GM23248 (cell line): ENCODE measurements at regions of chr6 and their contacts with region 1.

Region 1: DNA sequence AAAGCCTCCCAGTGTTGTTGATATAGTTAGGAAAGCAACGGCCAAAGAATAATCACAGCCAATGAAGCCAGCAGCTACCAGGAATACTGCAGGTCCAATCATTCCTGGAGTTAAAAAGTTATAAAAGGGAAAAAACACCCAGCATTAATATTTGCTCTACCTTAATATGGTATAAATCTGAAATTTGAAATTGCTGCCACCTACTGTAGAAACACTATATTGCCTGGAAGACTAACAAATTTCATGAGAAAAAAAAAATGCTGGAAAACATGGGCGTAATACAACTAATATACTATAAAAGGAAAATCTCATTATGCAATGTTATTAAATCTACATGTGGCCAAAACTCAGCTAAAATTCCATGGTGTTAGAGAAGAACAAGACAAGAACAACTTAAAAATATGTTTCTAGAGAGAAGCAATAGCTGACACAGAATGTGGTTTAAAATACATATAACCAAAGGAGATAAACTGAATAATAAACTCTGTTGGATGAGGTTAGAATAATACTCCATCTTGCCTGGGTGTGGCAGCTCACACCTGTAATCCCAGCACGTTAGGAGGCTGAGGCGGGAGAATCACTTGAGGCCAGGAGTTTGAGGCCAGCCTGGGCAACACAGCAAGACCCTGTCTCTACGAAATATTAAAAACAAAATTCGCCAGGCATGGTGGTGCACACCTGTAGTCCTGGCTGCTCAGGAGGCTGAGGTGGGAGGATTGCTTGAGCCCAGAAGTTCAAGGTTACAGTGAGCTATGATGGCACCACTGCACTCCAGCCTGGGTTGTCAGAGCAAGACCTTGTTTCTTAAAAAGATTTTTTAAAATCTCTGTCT is 43.1 kb downstream of the SLC17A5 start:
- DNase-seq: peak; percentile 71
- H3K4me3 ChIP-seq: no peak overlapping the region
- H3K27ac ChIP-seq: no peak overlapping the region
- H3K4me1 ChIP-seq: no peaks in the 10 kb centered on the region; the same call in 1 of the 2 replicates
- H3K27me3 ChIP-seq: no peaks in the 10 kb centered on the region

Region 2: GRCh38 chr6:72850469-72850868 is 760.2 kb before region 1 on chr6:
- in situ Hi-C with region 1: no loop called
- DNase-seq: no peak
- H3K4me3 ChIP-seq: no peak overlapping the region
- H3K27ac ChIP-seq: no peak overlapping the region
- H3K4me1 ChIP-seq: no peaks in the 10 kb centered on the region; the same call in 1 of the 2 replicates
- H3K27me3 ChIP-seq: no peaks in the 10 kb centered on the region

Region 3: DNA sequence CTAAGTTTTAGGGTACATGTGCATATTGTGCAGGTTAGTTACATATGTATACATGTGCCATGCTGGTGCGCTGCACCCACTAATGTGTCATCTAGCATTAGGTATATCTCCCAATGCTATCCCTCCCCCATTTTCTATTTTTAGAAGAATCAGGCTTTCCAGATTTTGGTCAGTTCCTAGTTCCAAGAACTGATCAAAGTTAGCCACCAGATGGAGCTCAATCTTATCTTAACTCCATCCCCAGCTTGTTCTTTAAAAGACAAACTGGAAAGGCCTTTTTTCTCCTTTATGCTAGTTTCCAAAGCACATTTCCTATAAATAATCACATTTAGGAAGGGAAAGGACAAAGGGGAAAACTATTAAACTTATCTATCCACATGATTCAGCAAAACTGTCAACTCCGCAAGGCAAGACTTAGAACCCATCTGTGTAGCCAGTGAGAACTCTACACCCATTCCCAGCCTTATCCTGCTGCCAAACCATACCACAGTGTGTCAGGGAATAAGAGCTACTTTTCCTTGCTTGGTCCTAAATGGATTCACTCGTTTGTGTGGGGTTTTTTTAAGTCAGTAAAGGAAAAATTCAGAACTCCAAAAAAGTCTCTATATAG is 324.9 kb before region 1 on chr6:
- in situ Hi-C with region 1: loop called (anchors 25 kb)
- DNase-seq: peak; percentile 86
- H3K4me3 ChIP-seq: no peak overlapping the region
- H3K27ac ChIP-seq: no peak overlapping the region
- H3K4me1 ChIP-seq: peaks cover 7% of the 10 kb centered on the region
- H3K27me3 ChIP-seq: no peaks in the 10 kb centered on the region

Region 4: DNA sequence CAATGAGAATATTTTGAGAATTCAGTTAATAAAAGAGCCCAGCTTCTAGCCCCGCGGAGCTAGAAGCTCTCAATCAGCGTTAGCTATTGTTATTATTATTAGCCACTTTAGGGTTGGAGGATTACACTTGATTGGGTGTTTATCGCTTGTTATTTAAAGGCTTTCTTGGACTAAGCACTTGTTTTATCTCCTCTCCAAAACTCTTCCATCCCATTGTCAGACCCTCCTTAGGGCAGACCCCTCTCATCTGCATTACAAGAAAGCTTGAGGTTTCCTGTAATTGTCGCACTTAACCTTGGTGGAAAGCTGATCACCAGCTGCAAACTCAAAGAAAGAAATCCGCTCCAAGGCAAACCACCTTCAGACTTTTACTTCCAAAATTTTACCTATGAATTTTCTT is 261.3 kb before region 1 on chr6:
- in situ Hi-C with region 1: no loop called
- DNase-seq: no peak
- H3K4me3 ChIP-seq: no peak overlapping the region
- H3K27ac ChIP-seq: no peak overlapping the region
- H3K4me1 ChIP-seq: no peaks in the 10 kb centered on the region
- H3K27me3 ChIP-seq: peaks cover 46% of the 10 kb centered on the region

Region 5: GRCh38 chr6:73520688-73521350 is 89.8 kb before region 1 on chr6 and contains the start of gene EEF1A1:
- in situ Hi-C with region 1: loop called (anchors 25 kb)
- DNase-seq: peak; percentile 100
- H3K4me3 ChIP-seq: peak within 1 kb of the TSS; percentile 97
- H3K27ac ChIP-seq: peak within 1 kb of the TSS; percentile 100
- H3K4me1 ChIP-seq: peaks cover 45% of the 10 kb centered on the region
- H3K27me3 ChIP-seq: no peaks in the 10 kb centered on the region
- total RNA-seq, gene EEF1A1: 13,436 and 14,561 TPM in 2 replicates